ENCODE measurements at regions of chr14 and their contacts with region 1.

Region 1: DNA sequence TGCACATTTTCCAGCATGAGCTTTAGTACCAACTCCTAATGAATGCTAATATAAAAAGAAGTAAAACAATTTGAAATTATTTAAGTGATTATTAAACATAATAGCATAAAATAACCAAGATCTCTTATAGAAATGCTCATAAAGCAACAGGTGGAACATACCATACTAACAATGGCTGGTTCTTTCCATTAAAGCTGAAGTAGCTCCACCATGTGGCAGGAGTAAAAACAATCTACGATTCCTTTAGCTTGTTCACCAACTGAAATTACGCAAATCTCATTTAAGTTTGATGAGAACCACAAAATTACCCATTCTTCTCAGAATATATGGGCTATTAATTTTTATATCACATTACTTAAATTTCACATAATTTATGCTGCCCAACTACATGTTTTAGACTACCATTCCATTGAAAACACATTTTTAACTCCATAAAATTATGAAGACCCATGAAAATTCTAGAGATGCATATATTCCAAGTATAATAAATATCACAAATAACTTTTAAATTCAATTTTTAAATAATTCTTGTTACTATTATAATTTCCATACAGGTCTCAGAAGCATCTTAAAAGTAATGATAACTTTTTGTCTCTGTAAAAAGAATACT is 213.6 kb downstream of the DAD1 start:
- DNase-seq: peak in 1 of 3 donors; percentile 65
- ATAC-seq: peak; percentile 48
- H3K4me3 ChIP-seq: no peak overlapping the region
- H3K4me1 ChIP-seq: no peaks in the 10 kb centered on the region
- CTCF ChIP-seq: no peak

Region 2: GRCh38 chr14:22314181-22314820 is 61.1 kb before region 1 on chr14:
- intact Hi-C with region 1: loop called (anchors 5 to 10 kb)
- DNase-seq: peak in 1 of 3 donors; percentile 57
- ATAC-seq: peak; percentile 78
- H3K4me3 ChIP-seq: no peak overlapping the region
- H3K4me1 ChIP-seq: no peaks in the 10 kb centered on the region
- CTCF ChIP-seq: peak; percentile 47

Region 3: DNA sequence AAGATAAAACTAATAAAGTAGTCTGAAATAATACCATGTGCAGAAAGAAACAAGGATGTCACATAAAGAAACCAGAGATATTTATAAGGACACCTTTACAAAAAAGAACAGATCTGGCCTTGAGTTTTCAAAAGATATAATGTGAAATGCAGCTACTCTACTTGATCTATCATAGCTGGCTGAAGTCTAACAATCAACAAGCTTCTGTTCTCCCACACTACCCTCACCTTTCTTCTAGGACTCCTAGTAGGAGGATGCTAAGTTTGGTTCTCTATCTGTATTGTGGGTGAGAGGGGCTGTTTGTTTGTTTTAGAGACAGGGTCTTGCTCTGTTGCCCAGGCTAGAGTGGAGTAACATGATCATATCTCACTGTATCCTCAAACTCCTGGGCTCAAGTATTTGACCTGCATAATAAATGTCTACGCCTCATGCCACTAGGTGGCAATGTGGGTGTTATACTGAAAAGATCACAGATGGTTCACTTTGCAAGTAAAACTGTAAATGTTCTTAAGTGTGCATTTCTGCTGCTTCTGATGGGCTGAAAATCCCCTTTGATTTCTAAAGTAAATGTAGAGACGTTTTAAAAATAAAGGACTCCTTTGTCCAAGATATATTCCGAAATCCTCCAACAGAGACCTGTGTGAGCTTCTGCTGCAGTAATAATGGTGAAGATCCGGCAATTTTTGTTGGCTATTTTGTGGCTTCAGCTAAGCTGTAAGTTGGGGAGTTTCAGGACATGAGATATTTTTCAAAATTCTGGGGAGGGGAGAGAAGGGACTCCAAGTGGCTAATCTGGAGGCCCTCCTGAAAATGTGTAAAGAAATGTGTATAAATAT is 55.7 kb before region 1 on chr14:
- intact Hi-C with region 1: loop called (anchors 5 to 10 kb)
- DNase-seq: peak in 1 of 3 donors; percentile 84
- ATAC-seq: peak; percentile 64
- H3K4me3 ChIP-seq: no peak overlapping the region
- H3K4me1 ChIP-seq: no peaks in the 10 kb centered on the region
- CTCF ChIP-seq: peak; percentile 43

Measured in mucosa of descending colon (tissue), 3 donors.